Activated T-helper 2 cell treated with anti-CD3 and anti-CD28 coated beads, Interferon-gamma antibody, Interleukin-2, Interleukin-4, amounts not matched to agents 10 μg/mL and 5 μg/mL and 100 μg/mL, durations not matched to agents 14 hours and 24 hours and 36 hours (primary cell): ENCODE measurements at regions of chr6 and their contacts with region 1.

Region 1: GRCh38 chr6:155678361-155678760 is 222.7 kb upstream of the NOX3 start:
- DNase-seq: no peak
- H3K4me3 Mint-ChIP-seq: no peak overlapping the region
- H3K27ac Mint-ChIP-seq: no peak overlapping the region
- H3K4me1 Mint-ChIP-seq: no peaks in the 10 kb centered on the region
- H3K27me3 Mint-ChIP-seq: no peaks in the 10 kb centered on the region

Region 2: GRCh38 chr6:155162672-155163071 is 515.7 kb before region 1 on chr6:
- intact Hi-C with region 1: no loop called
- DNase-seq: no peak
- H3K4me3 Mint-ChIP-seq: no peak overlapping the region
- H3K27ac Mint-ChIP-seq: peak overlapping the region; percentile 42
- H3K4me1 Mint-ChIP-seq: peaks cover 63% of the 10 kb centered on the region
- H3K27me3 Mint-ChIP-seq: no peaks in the 10 kb centered on the region

Region 3: GRCh38 chr6:155561257-155561965 is 117.0 kb before region 1 on chr6:
- intact Hi-C with region 1: loop called (anchors 10 kb)
- DNase-seq: no peak
- H3K4me3 Mint-ChIP-seq: no peak overlapping the region
- H3K27ac Mint-ChIP-seq: no peak overlapping the region
- H3K4me1 Mint-ChIP-seq: no peaks in the 10 kb centered on the region
- H3K27me3 Mint-ChIP-seq: no peaks in the 10 kb centered on the region

Region 4: GRCh38 chr6:155638200-155638599 is 40.2 kb before region 1 on chr6:
- intact Hi-C with region 1: no loop called
- DNase-seq: no peak
- H3K4me3 Mint-ChIP-seq: no peak overlapping the region
- H3K27ac Mint-ChIP-seq: no peak overlapping the region
- H3K4me1 Mint-ChIP-seq: no peaks in the 10 kb centered on the region
- H3K27me3 Mint-ChIP-seq: no peaks in the 10 kb centered on the region